ENCODE measurements at regions of chr18 and their contacts with region 1.

Region 1: DNA sequence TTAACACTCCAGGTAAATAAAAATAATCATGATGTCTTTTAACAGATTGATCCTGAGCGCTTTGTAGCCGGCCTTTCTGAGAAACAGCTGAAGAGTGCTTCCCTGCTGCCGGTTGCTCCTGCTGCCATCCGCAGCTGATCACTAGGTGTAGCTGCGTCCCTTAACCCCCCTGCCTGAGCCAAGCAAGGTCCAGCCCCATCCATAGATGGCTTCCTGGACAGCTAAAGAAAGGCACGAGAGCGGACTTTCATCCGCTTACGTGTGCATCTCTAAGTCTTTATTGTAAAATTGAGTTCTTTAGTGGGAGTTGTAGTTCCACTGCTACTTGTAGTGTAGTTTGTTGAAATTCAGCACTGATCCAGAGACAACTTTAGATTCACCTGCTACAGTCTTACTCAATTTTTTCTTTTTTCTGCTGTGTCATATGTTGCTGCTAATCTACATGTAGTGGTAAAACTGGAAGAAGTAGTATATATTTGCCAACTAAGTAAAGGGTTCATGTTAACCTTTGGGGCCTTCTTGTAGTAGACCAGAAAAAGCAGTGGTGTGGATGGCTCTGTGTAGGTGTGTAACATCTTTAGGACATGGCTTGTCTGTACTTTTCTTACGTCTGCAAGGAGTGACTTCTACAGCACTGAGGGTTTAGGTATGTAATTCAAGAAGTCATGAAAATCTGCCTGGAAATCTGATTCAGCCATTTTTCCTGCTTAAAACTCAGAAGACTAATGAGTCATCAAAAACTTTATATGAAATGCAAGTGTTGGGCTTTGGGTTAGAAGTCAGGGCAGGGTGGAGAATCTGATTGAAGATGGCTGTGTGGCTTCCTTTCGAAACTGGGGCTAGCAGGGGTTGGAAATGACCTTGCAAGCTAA is 8.3 kb downstream of the PTPRM start:
- DNase-seq: no peak
- H3K4me3 ChIP-seq: no peak overlapping the region
- H3K27me3 ChIP-seq: no peaks in the 10 kb centered on the region
- CTCF ChIP-seq: no peak

Region 2: DNA sequence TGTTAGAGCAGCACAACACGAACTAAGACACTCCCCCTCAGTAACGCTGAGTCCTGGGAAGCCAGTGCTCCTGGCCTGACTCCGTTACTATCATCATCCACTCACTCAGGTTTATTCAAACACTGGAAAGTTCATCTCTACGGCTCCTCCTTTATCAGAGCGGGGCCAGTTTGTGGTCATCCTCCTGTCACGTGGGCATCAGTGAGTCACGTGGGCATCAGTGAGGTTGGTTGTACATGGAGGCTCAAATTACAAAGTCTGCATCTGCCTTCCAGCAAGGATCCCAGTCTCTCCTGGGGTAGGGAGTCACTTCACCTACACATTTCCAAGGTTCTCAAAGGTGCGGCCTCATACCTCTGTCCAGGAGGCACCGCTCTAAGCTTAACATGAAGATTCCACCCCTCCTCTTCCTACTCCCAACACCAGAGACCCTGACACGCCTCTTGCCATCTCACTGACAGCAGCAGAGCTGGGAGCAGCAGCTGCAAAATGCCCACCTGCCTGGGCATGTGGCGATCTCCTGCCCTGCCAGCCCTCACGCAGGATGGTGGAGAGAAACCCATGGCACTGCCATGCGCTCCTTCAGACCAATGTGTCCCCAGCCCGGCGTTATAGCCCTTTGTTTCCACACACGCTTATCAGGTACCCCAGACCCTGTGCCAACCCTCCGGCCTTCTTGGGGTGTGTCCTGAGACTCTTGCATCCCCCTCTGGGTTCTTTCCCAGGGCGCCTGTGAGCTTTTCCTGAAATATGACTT is 107.5 kb before region 1 on chr18:
- CTCF ChIA-PET with region 1: no interaction called
- POLR2A ChIA-PET with region 1: no interaction called
- DNase-seq: no peak
- H3K4me3 ChIP-seq: no peak overlapping the region
- H3K27me3 ChIP-seq: no peaks in the 10 kb centered on the region
- CTCF ChIP-seq: no peak

Region 3: GRCh38 chr18:7559709-7560319 is 15.6 kb before region 1 on chr18:
- CTCF ChIA-PET with region 1: no interaction called
- POLR2A ChIA-PET with region 1: no interaction called
- DNase-seq: no peak
- H3K4me3 ChIP-seq: no peak overlapping the region
- H3K27me3 ChIP-seq: no peaks in the 10 kb centered on the region
- CTCF ChIP-seq: no peak

Region 4: DNA sequence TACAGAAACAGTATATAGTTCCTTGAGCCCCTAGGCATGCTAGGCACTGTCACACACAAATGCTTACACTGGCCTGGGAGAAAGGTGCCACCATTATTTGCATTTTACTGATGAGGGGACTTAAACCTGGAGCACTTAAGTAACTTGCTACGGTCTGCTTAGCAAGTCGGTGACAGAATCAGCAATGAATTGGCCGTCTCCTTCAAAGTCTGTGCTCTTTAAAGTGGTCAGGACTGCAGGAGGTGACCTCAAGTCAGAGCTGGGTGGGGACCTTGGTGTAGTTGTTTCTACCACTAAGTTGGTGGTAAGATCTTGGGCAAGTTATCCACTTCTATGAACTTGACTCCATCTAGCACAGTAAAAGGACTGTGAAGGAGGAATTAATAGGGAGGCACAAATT is 26.5 kb after region 1 on chr18:
- CTCF ChIA-PET with region 1: interaction called, 8 read pairs
- POLR2A ChIA-PET with region 1: interaction called, 10 read pairs
- DNase-seq: no peak
- H3K4me3 ChIP-seq: no peak overlapping the region
- H3K27me3 ChIP-seq: no peaks in the 10 kb centered on the region
- CTCF ChIP-seq: no peak

Measured in BJ (cell line).